ENCODE measurements at regions of chr11 and their contacts with region 1.

Region 1: DNA sequence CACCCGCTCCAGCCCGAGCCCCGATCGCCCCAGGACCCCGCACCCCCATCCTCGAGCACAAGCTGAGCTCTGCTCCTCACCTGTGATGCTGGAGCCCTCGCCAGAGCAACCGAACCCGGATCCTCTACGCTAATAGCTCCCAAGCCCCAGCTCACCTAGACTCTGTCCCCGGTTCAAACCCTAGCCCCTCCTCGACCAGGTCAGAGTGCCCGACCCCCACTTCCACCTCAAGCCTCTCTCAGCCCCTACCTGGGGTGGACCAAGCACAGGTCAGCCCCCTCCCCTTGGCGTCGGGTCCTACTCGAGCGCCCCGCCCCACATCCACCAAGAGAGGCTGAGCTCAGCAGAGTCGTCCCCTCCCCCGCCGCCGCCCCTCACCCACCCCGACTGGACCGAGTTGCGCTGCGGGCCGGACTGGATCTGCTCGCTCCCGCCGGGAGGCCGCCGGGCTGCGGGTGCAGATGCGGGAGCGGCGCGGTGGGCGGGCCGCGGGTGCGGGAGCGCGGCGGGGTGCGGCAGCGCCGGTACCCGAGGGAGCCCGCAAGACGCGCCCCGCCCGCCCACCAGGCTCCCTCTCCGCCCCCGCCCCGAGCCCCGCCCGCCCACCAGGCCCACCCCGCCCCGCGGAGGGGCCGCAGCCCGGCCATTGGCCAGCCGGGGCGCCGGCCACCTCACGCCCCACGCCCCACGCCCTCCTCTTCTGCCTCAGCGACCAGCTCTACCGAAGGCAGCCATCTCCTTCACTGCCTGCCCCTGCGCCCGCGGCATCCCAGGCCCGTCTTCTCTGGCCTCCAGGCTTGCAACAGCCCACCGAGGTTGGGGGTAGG is 577 bp upstream of the DKK3 start:
- DNase-seq: peak; percentile 69
- H3K4me3 ChIP-seq: peak overlapping the region; percentile 79 to 97 (median 91)
- H3K27ac ChIP-seq: peak overlapping the region; percentile 12
- H3K4me1 ChIP-seq: peaks cover 37% of the 10 kb centered on the region
- H3K27me3 ChIP-seq: peaks cover 0 to 2% of the 10 kb centered on the region in 2 experiments
- CTCF ChIP-seq: no peak
- POLR2A ChIP-seq: peak; percentile 20

Region 2: DNA sequence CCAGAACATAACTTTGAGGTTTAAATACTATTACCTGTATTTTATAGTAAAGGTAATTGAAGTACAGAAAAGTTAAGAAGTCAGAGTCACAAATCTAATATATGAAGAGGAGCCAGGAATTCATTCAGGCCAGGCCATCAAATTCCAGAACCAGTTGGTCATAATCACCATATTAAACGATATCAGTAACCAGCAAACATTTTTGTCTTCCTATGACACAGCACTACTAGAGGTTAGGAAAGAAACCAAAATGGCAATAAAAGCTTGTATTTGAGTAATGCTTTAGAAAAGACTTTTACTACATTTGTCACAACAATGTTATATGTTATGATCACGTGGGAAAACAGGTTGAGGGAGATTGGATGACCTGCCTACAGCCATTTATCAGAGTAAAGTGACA is 62.8 kb before region 1 on chr11:
- CTCF ChIA-PET with region 1: no interaction called
- POLR2A ChIA-PET with region 1: no interaction called
- dilution Hi-C with region 1: no loop called
- intact Hi-C with region 1: no loop called
- DNase-seq: no peak
- H3K4me3 ChIP-seq: no peak overlapping the region
- H3K27ac ChIP-seq: no peak overlapping the region
- H3K4me1 ChIP-seq: no peaks in the 10 kb centered on the region
- H3K27me3 ChIP-seq: no peaks in the 10 kb centered on the region
- CTCF ChIP-seq: no peak
- POLR2A ChIP-seq: no peak

Region 3: GRCh38 chr11:11966826-11967668 is 42.0 kb before region 1 on chr11:
- CTCF ChIA-PET with region 1: interaction called, 14 read pairs
- POLR2A ChIA-PET with region 1: no interaction called
- dilution Hi-C with region 1: no loop called
- intact Hi-C with region 1: no loop called
- DNase-seq: peak; percentile 49
- H3K4me3 ChIP-seq: no peak overlapping the region
- H3K27ac ChIP-seq: no peak overlapping the region
- H3K4me1 ChIP-seq: no peaks in the 10 kb centered on the region
- H3K27me3 ChIP-seq: no peaks in the 10 kb centered on the region
- CTCF ChIP-seq: peak; percentile 80 to 86
- POLR2A ChIP-seq: no peak

Region 4: DNA sequence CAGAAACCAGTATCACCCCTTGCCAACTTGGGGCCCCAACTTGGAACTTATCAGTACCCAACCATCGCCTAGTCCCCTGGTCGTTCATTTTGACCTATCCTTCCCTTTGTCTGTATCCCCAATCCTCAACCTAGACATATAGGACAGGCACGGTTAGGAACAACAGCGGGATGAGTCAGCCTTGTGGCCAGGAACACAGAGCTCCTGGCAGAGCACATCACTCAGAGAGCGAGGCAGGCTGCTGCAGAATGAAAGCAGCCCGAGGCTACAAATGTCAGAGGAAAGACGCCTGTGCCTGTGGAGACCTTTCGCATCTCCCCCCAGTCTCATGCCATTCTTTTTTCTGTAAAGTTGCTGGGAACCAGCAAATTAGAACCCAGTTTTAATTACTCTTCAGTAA is 15.2 kb before region 1 on chr11:
- CTCF ChIA-PET with region 1: interaction called, 10 read pairs
- POLR2A ChIA-PET with region 1: interaction called, 3 read pairs
- dilution Hi-C with region 1: no loop called
- intact Hi-C with region 1: loop called (anchors 1 kb)
- DNase-seq: peak; percentile 41
- H3K4me3 ChIP-seq: no peak overlapping the region
- H3K27ac ChIP-seq: peak overlapping the region; percentile 48
- H3K4me1 ChIP-seq: peaks cover 29% of the 10 kb centered on the region
- H3K27me3 ChIP-seq: no peaks in the 10 kb centered on the region
- CTCF ChIP-seq: no peak
- POLR2A ChIP-seq: no peak

Region 5: DNA sequence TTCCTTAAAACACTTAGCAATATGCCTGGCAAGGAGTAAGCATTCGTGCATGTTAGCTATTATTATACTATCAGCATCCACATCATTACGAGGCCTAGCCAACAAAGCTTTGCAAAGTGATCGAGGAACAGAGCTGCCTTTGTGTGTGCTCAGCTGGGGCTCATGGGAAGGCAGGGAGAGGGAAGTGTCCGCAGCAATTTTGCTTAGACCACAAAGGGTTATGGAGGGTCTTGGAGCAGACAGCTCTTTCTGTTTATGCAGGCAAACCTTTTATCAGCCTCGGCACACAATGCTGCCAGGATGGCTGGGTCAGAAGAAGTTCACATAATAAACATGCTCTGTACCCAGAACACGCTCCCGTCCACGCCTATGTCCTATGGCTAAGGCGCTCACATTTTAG is 10.3 kb after region 1 on chr11:
- CTCF ChIA-PET with region 1: interaction called, 4 read pairs
- POLR2A ChIA-PET with region 1: interaction called, 4 read pairs
- dilution Hi-C with region 1: no loop called
- intact Hi-C with region 1: loop called (anchors 1 kb)
- DNase-seq: peak; percentile 97
- H3K4me3 ChIP-seq: no peak overlapping the region
- H3K27ac ChIP-seq: no peak overlapping the region
- H3K4me1 ChIP-seq: peaks cover 22% of the 10 kb centered on the region
- H3K27me3 ChIP-seq: no peaks in the 10 kb centered on the region
- CTCF ChIP-seq: no peak
- POLR2A ChIP-seq: no peak

Region 6: GRCh38 chr11:12137938-12138731 is 129.1 kb after region 1 on chr11:
- CTCF ChIA-PET with region 1: no interaction called
- POLR2A ChIA-PET with region 1: no interaction called
- dilution Hi-C with region 1: no loop called
- intact Hi-C with region 1: no loop called
- DNase-seq: peak; percentile 82
- H3K4me3 ChIP-seq: no peak overlapping the region
- H3K27ac ChIP-seq: peak overlapping the region; percentile 61
- H3K4me1 ChIP-seq: peaks cover 19% of the 10 kb centered on the region
- H3K27me3 ChIP-seq: no peaks in the 10 kb centered on the region
- CTCF ChIP-seq: no peak
- POLR2A ChIP-seq: no peak